ENCODE measurements at regions of chr2 and their contacts with region 1.

Region 1: GRCh38 chr2:8408560-8409460 is 273.0 kb upstream of the ID2 start:
- DNase-seq: peak; percentile 99
- ATAC-seq: peak; percentile 90
- H3K4me3 ChIP-seq: no peak overlapping the region
- H3K27ac ChIP-seq: peak overlapping the region; percentile 80
- H3K4me1 ChIP-seq: peaks cover 32% of the 10 kb centered on the region
- H3K27me3 ChIP-seq: no peaks in the 10 kb centered on the region
- CTCF ChIP-seq: no peak
- EP300 ChIP-seq: peak; percentile 95 to 96
- POLR2A ChIP-seq: no peak
- RAD21 ChIP-seq: peak; percentile 29; the same call in 1 of the 2 replicates

Region 2: GRCh38 chr2:7773362-7774360 is 635.1 kb before region 1 on chr2:
- CTCF ChIA-PET with region 1: no interaction called
- POLR2A ChIA-PET with region 1: no interaction called
- RAD21 ChIA-PET with region 1: no interaction called
- SMC1A ChIA-PET with region 1: interaction called, 8 read pairs
- in situ Hi-C with region 1: no loop called
- intact Hi-C with region 1: loop called (anchors 2 kb)
- DNase-seq: peak; percentile 91
- ATAC-seq: peak; percentile 86
- H3K4me3 ChIP-seq: peak overlapping the region; percentile 45
- H3K27ac ChIP-seq: peak overlapping the region; percentile 48
- H3K4me1 ChIP-seq: peaks cover 19% of the 10 kb centered on the region
- H3K27me3 ChIP-seq: no peaks in the 10 kb centered on the region
- CTCF ChIP-seq: no peak
- EP300 ChIP-seq: peak; percentile 98 to 99
- POLR2A ChIP-seq: no peak
- RAD21 ChIP-seq: peak; percentile 21; the same call in 1 of the 2 replicates

Region 3: DNA sequence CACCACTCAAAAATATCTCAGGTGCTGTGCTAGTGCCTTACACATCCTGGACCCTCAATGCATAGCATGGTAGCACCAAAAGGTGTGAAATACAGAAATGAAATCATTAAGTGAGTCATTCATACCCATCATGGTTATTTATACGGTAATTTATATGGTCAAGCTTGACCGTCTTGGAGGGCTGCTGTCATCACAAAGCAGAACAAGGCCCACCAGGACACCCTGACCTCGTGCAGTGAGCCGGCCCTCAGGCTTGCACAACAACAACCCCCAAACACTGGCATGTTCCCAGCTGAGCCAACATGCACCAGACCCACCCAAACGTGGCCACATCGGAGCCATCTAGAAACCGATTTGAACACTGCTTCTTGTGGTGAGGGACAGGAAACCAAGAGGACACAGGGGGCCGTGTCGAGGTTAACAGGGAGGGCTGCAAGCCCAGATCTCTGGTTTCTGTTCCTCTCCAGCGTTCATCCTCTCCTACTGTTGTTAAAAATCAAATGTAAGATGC is 105.4 kb before region 1 on chr2:
- CTCF ChIA-PET with region 1: no interaction called
- POLR2A ChIA-PET with region 1: interaction called, 5 read pairs
- RAD21 ChIA-PET with region 1: interaction called, 13 read pairs
- SMC1A ChIA-PET with region 1: interaction called, 352 read pairs
- in situ Hi-C with region 1: no loop called
- intact Hi-C with region 1: loop called (anchors 1 kb)
- DNase-seq: peak; percentile 95
- ATAC-seq: peak; percentile 77
- H3K4me3 ChIP-seq: no peak overlapping the region
- H3K27ac ChIP-seq: peak overlapping the region; percentile 81
- H3K4me1 ChIP-seq: peaks cover 74% of the 10 kb centered on the region
- H3K27me3 ChIP-seq: no peaks in the 10 kb centered on the region
- CTCF ChIP-seq: peak in 1 of 3 experiments; percentile 4; a peak in 1 of 6 replicates
- EP300 ChIP-seq: peak; percentile 92 to 94
- POLR2A ChIP-seq: peak; percentile 27; the same call in 1 of the 2 replicates
- RAD21 ChIP-seq: peak; percentile 35; the same call in 1 of the 2 replicates

Region 4: DNA sequence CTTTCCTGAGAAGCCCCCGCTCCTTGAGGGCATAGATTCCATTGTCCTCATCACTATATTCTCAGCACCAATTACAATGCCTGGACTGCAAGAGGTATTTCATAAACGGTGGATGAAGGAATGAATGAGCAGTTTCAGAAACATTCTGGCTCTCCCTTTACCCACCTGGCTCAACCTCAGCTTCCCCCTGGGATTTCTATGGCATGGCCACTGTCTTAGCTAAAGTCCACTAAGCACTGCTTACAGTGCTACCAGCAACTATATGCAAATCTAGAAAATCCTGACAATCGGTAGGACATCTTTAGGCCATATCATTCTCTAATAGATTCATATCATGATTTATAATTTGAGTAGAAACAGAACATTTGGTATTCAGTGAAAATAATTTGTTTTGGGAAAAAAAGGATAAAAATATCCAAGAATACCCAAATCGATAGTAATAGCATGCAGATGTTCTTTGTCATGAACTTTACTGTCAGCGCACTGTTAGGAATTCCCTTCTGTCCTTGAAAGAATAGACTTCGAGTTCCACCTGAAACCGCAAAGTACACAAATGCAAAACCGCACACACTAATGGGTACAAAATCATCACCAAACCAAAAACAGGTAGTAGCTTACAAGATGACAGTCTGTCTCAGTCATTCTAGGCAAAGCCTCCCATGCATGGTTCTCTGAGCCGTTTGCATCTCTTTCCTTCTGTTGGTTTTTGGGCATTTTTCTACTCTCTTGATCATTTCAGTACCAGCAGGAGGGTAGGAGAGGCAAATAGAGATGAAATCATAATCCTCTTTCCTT is 30.6 kb before region 1 on chr2:
- CTCF ChIA-PET with region 1: interaction called, 3 read pairs
- POLR2A ChIA-PET with region 1: interaction called, 4 read pairs
- RAD21 ChIA-PET with region 1: interaction called, 18 read pairs
- SMC1A ChIA-PET with region 1: interaction called, 43 read pairs
- in situ Hi-C with region 1: no loop called
- intact Hi-C with region 1: loop called (anchors 1 kb)
- DNase-seq: peak; percentile 63
- ATAC-seq: peak; percentile 88
- H3K4me3 ChIP-seq: no peak overlapping the region
- H3K27ac ChIP-seq: no peak overlapping the region
- H3K4me1 ChIP-seq: peaks cover 33% of the 10 kb centered on the region
- H3K27me3 ChIP-seq: no peaks in the 10 kb centered on the region
- CTCF ChIP-seq: no peak
- EP300 ChIP-seq: peak in 1 of 2 experiments; percentile 42; a peak in 2 of 4 replicates
- POLR2A ChIP-seq: no peak
- RAD21 ChIP-seq: 0 out of 2 replicates have a peak, but pooled peaks have one; percentile 4

Region 5: DNA sequence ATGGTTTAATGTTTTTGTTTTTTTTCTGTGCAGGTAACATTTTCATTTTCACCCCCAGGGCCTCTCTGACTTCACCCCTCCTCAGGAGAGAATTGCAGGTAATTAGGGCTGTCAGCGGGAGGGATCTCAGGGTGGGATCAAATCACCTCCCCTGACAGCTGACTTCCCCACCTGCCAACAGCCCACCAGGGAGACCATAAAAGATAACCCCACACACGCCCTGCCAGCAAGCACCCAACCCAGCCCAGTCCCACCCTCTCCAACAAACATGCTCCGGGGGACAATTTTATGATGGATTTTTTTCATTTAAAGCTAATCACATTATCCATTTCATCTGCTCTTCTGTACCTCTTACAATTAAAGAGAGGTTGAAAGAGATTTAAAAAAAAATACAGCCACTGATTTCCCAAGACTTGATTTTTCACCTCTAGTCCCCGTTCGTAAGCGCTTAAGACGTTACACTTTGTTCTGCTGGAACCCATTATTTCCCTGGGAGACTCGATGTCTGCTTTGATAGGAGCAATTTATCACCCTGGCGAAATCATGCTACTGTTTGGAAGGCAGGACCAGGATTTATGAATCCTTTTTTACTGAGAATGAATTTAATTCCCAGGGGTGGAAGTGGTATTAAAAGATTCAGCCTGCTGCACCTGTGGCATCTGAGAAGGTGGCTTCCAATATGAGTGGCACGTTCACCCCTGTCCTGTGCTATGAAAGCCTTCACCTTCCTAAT is 40.2 kb after region 1 on chr2:
- CTCF ChIA-PET with region 1: no interaction called
- POLR2A ChIA-PET with region 1: no interaction called
- RAD21 ChIA-PET with region 1: no interaction called
- SMC1A ChIA-PET with region 1: no interaction called
- in situ Hi-C with region 1: no loop called
- intact Hi-C with region 1: no loop called
- DNase-seq: no peak
- ATAC-seq: no peak
- H3K4me3 ChIP-seq: no peak overlapping the region
- H3K27ac ChIP-seq: no peak overlapping the region
- H3K4me1 ChIP-seq: no peaks in the 10 kb centered on the region
- H3K27me3 ChIP-seq: no peaks in the 10 kb centered on the region
- CTCF ChIP-seq: no peak
- EP300 ChIP-seq: no peak
- POLR2A ChIP-seq: no peak
- RAD21 ChIP-seq: no peak

Region 6: DNA sequence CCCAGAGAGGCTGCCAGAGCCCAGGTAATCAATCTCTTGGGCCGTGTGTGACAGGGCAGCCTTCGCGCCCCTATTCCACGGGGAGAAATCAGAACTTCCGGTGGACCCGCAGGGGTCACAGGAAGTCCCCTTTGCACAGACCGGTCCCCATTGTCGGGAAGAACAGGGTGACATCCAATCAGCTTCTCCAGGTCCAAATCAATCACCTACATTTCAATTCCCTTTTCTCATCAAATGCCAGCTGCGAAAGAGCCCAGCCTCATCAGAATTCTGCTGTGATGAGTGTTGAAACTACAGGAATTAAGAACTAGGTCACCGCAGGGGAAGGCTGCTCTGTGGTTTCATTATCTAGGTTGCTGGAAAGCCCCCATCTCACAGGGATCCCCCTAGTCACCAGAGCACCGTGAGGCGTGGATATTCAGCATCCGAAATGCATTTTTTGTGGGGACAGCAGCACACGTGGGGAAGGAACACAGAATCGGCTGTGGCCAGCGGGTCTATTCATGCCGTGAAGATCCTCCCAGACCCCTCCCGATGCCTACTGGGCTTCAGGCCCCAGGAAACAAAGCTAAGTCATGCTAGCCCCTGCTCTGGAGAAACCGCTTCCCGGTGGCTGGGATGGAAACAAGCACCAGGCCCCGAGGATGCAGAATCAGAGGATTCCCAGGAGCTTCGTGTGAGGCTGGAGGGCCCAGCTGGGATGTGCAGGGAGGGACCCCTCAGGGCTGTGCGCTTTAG is 79.4 kb after region 1 on chr2:
- CTCF ChIA-PET with region 1: interaction called, 5 read pairs
- POLR2A ChIA-PET with region 1: interaction called, 7 read pairs
- RAD21 ChIA-PET with region 1: interaction called, 33 read pairs
- SMC1A ChIA-PET with region 1: interaction called, 12 read pairs
- in situ Hi-C with region 1: no loop called
- intact Hi-C with region 1: loop called (anchors 1 kb)
- DNase-seq: peak; percentile 95
- ATAC-seq: peak; percentile 63
- H3K4me3 ChIP-seq: peak overlapping the region; percentile 75
- H3K27ac ChIP-seq: peak overlapping the region; percentile 80
- H3K4me1 ChIP-seq: peaks cover 19% of the 10 kb centered on the region
- H3K27me3 ChIP-seq: no peaks in the 10 kb centered on the region
- CTCF ChIP-seq: no peak
- EP300 ChIP-seq: peak; percentile 78 to 80; a peak in 3 of 4 replicates
- POLR2A ChIP-seq: no peak
- RAD21 ChIP-seq: peak; percentile 1; the same call in 1 of the 2 replicates

Region 7: GRCh38 chr2:8574144-8575037 is 165.6 kb after region 1 on chr2:
- CTCF ChIA-PET with region 1: interaction called, 3 read pairs
- POLR2A ChIA-PET with region 1: no interaction called
- RAD21 ChIA-PET with region 1: interaction called, 10 read pairs
- SMC1A ChIA-PET with region 1: interaction called, 4 read pairs
- in situ Hi-C with region 1: no loop called
- intact Hi-C with region 1: no loop called
- DNase-seq: no peak
- ATAC-seq: peak; percentile 77
- H3K4me3 ChIP-seq: peak overlapping the region; percentile 52; the same call in 1 of the 2 replicates
- H3K27ac ChIP-seq: peak overlapping the region; percentile 51
- H3K4me1 ChIP-seq: peaks cover 46% of the 10 kb centered on the region
- H3K27me3 ChIP-seq: no peaks in the 10 kb centered on the region
- CTCF ChIP-seq: 0 out of 6 replicates have a peak, but pooled peaks of 1 of the 3 experiments have one; percentile 9
- EP300 ChIP-seq: no peak
- POLR2A ChIP-seq: no peak
- RAD21 ChIP-seq: 0 out of 2 replicates have a peak, but pooled peaks have one; percentile 12

Measured in GM12878 (cell line).